H1 (cell line): ENCODE measurements at regions of chr17 and their contacts with region 1.

Region 1: GRCh38 chr17:48215583-48216139 is 108.1 kb downstream of the SNX11 start:
- DNase-seq: peak in 1 of 2 experiments; percentile 47
- H3K4me3 ChIP-seq: no peak overlapping the region
- H3K27ac ChIP-seq: no peak overlapping the region
- H3K4me1 ChIP-seq: no peaks in the 10 kb centered on the region; a peak in 1 of 7 replicates
- H3K27me3 ChIP-seq: peaks cover 0 to 3% (median 1%) of the 10 kb centered on the region in 4 experiments; a peak in 3 of 7 replicates
- CTCF ChIP-seq: peak; percentile 63 to 78 (median 77)
- EP300 ChIP-seq: no peak
- POLR2A ChIP-seq: no peak
- RAD21 ChIP-seq: peak; percentile 93

Region 2: GRCh38 chr17:48084932-48085444 is 130.7 kb before region 1 on chr17:
- CTCF ChIA-PET with region 1: no interaction called
- POLR2A ChIA-PET with region 1: no interaction called
- DNase-seq: no peak
- H3K4me3 ChIP-seq: no peak overlapping the region
- H3K27ac ChIP-seq: no peak overlapping the region
- H3K4me1 ChIP-seq: no peaks in the 10 kb centered on the region
- H3K27me3 ChIP-seq: no peaks in the 10 kb centered on the region
- CTCF ChIP-seq: no peak
- EP300 ChIP-seq: no peak
- POLR2A ChIP-seq: no peak
- RAD21 ChIP-seq: no peak

Region 3: GRCh38 chr17:48153691-48154358 is 61.8 kb before region 1 on chr17:
- CTCF ChIA-PET with region 1: interaction called, 12 read pairs
- POLR2A ChIA-PET with region 1: no interaction called
- DNase-seq: no peak
- H3K4me3 ChIP-seq: no peak overlapping the region
- H3K27ac ChIP-seq: no peak overlapping the region
- H3K4me1 ChIP-seq: peaks cover 0 to 12% (median 8%) of the 10 kb centered on the region in 4 experiments; a peak in 2 of 7 replicates
- H3K27me3 ChIP-seq: peaks cover 0 to 7% (median 1%) of the 10 kb centered on the region in 4 experiments; a peak in 3 of 7 replicates
- CTCF ChIP-seq: peak; percentile 47 to 67 (median 53)
- EP300 ChIP-seq: no peak
- POLR2A ChIP-seq: no peak
- RAD21 ChIP-seq: peak; percentile 81 to 83

Region 4: GRCh38 chr17:48181653-48182052 is 34.0 kb before region 1 on chr17:
- CTCF ChIA-PET with region 1: interaction called, 28 read pairs
- POLR2A ChIA-PET with region 1: interaction called, 3 read pairs
- DNase-seq: no peak
- H3K4me3 ChIP-seq: no peak overlapping the region
- H3K27ac ChIP-seq: no peak overlapping the region
- H3K4me1 ChIP-seq: peaks cover 0 to 9% (median 3%) of the 10 kb centered on the region in 4 experiments; a peak in 3 of 7 replicates
- H3K27me3 ChIP-seq: no peaks in the 10 kb centered on the region
- CTCF ChIP-seq: peak; percentile 37 to 81 (median 76)
- EP300 ChIP-seq: no peak
- POLR2A ChIP-seq: no peak
- RAD21 ChIP-seq: peak; percentile 84 to 85

Region 5: DNA sequence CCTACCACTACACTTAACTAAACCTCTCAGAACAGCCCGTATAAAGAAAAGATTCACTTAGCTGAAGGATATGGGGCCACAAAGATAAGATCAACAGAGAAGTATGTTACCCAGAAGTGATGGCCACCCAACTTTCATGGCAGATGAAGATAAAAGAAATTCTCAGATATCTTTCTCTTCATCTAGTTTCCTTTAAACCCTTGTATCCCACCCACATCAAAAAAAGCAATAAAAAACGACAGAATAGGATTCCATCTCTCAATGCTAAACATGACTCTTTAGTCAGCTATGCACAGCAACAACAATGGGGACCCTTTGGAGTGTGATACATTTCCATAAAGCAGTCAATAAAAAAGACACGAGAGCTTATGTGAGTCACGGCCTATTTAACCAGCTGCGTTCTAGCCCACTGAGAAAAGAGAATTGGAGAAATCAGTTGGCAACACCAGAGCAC is 21.5 kb before region 1 on chr17:
- CTCF ChIA-PET with region 1: interaction called, 11 read pairs
- POLR2A ChIA-PET with region 1: no interaction called
- DNase-seq: no peak
- H3K4me3 ChIP-seq: no peak overlapping the region
- H3K27ac ChIP-seq: no peak overlapping the region
- H3K4me1 ChIP-seq: peaks cover 0 to 12% (median 7%) of the 10 kb centered on the region in 4 experiments; a peak in 3 of 7 replicates
- H3K27me3 ChIP-seq: peaks cover 0 to 2% (median 0%) of the 10 kb centered on the region in 4 experiments; a peak in 1 of 7 replicates
- CTCF ChIP-seq: no peak
- EP300 ChIP-seq: no peak
- POLR2A ChIP-seq: no peak
- RAD21 ChIP-seq: no peak

Region 6: GRCh38 chr17:48202959-48203358 is 12.7 kb before region 1 on chr17:
- CTCF ChIA-PET with region 1: interaction called, 21 read pairs
- POLR2A ChIA-PET with region 1: interaction called, 4 read pairs
- DNase-seq: no peak
- H3K4me3 ChIP-seq: no peak overlapping the region
- H3K27ac ChIP-seq: no peak overlapping the region
- H3K4me1 ChIP-seq: no peaks in the 10 kb centered on the region
- H3K27me3 ChIP-seq: no peaks in the 10 kb centered on the region
- CTCF ChIP-seq: no peak
- EP300 ChIP-seq: no peak
- POLR2A ChIP-seq: no peak
- RAD21 ChIP-seq: no peak

Region 7: GRCh38 chr17:48228721-48229120 is 13.1 kb after region 1 on chr17:
- CTCF ChIA-PET with region 1: interaction called, 61 read pairs
- POLR2A ChIA-PET with region 1: interaction called, 3 read pairs
- DNase-seq: peak; percentile 9 to 60
- H3K4me3 ChIP-seq: no peak overlapping the region
- H3K27ac ChIP-seq: no peak overlapping the region
- H3K4me1 ChIP-seq: peaks cover 0 to 7% (median 3%) of the 10 kb centered on the region in 4 experiments; a peak in 3 of 7 replicates
- H3K27me3 ChIP-seq: peaks cover 0 to 2% (median 0%) of the 10 kb centered on the region in 4 experiments; a peak in 1 of 7 replicates
- CTCF ChIP-seq: peak; percentile 73 to 90 (median 75)
- EP300 ChIP-seq: no peak
- POLR2A ChIP-seq: no peak
- RAD21 ChIP-seq: peak; percentile 30 to 54; a peak in 3 of 4 replicates

Region 8: DNA sequence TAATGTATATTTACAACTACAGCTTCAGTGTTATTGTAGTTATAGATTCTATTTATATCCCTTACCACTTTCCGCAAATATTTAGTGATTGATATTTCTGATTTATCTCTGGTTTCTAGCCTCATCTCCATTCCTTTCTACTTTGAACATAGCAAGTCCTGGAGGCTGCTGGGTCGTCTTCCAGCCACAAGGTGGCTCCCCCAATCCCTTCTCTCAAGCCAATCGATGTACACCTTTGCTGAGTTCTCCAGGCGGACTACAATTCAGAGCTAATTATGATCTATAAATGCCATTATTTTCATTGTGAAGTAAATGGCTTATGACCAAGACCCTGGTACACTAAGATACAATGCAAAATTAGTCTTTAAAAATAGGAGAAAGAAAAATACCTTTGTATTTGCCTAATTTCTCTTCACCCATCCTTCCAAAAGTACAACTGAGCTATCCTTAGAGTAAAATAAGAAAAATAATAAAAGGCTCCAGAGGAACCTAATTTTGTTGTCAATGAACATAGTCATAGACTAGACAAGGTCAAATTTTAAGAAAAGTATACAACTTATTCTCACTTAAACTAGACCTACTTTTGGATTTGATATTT is 92.3 kb after region 1 on chr17:
- CTCF ChIA-PET with region 1: interaction called, 27 read pairs
- POLR2A ChIA-PET with region 1: no interaction called
- DNase-seq: peak in 1 of 2 experiments; percentile 15
- H3K4me3 ChIP-seq: no peak overlapping the region
- H3K27ac ChIP-seq: no peak overlapping the region
- H3K4me1 ChIP-seq: no peaks in the 10 kb centered on the region
- H3K27me3 ChIP-seq: no peaks in the 10 kb centered on the region; a peak in 2 of 7 replicates
- CTCF ChIP-seq: peak; percentile 78 to 87 (median 81)
- EP300 ChIP-seq: no peak
- POLR2A ChIP-seq: no peak
- RAD21 ChIP-seq: peak; percentile 58 to 69

Region 9: DNA sequence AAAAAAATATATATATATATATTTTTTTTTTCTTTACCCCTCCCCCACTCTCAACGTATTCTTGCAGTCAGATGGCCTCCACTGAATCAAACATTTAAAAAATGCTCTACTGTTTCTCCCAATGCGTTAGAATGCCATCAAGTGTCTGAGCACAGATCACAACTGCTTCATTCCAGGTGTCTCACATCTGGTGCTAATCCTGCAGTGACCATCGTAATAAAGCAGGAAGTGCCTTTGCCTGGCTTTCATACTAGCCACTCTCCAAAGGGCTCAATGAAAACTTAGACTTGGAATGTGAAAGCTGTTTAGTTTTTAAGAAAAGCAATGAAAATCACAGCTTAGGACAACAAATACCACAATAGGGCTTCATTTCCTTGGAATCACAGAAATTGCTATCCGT is 177.2 kb after region 1 on chr17:
- CTCF ChIA-PET with region 1: no interaction called
- POLR2A ChIA-PET with region 1: no interaction called
- DNase-seq: no peak
- H3K4me3 ChIP-seq: no peak overlapping the region
- H3K27ac ChIP-seq: no peak overlapping the region
- H3K4me1 ChIP-seq: no peaks in the 10 kb centered on the region
- H3K27me3 ChIP-seq: no peaks in the 10 kb centered on the region
- CTCF ChIP-seq: no peak
- EP300 ChIP-seq: no peak
- POLR2A ChIP-seq: no peak
- RAD21 ChIP-seq: no peak

Region 10: GRCh38 chr17:48413613-48414405 is 198.1 kb after region 1 on chr17:
- CTCF ChIA-PET with region 1: no interaction called
- POLR2A ChIA-PET with region 1: no interaction called
- DNase-seq: no peak
- H3K4me3 ChIP-seq: no peak overlapping the region
- H3K27ac ChIP-seq: no peak overlapping the region
- H3K4me1 ChIP-seq: peaks cover 0 to 4% (median 1%) of the 10 kb centered on the region in 4 experiments; a peak in 1 of 7 replicates
- H3K27me3 ChIP-seq: peaks cover 0 to 1% (median 0%) of the 10 kb centered on the region in 4 experiments; a peak in 1 of 7 replicates
- CTCF ChIP-seq: no peak
- EP300 ChIP-seq: no peak
- POLR2A ChIP-seq: no peak
- RAD21 ChIP-seq: no peak